GM10248 (cell line): ENCODE measurements at regions of chr3 and their contacts with region 1.

Region 1: GRCh38 chr3:32992322-32992692 is 40.9 kb downstream of the CCR4 start:
- DNase-seq: no peak
- CTCF ChIP-seq: no peak

Region 2: GRCh38 chr3:32975891-32976595 is 16.3 kb before region 1 on chr3:
- CTCF ChIA-PET with region 1: interaction called, 10 read pairs
- POLR2A ChIA-PET with region 1: no interaction called
- DNase-seq: no peak
- CTCF ChIP-seq: no peak

Region 3: DNA sequence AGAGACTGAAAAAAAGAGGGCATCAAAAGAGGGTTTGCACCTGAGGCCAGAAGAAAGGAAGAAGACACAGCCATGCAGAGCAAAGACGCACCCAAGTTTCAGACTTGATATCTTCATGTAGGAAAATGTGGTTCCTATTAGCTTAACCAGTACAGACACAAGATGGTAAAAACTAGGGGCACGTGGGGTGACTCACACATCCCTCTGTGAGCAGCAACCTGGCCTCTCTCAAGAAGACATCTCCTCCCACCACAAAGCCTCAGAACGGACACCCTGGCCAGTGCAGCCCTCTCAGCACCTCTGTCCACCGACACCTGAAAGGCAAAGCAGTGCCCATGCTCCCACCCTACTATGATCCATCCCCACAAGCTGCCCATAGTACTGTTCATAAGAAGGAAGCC is 71.3 kb after region 1 on chr3:
- CTCF ChIA-PET with region 1: no interaction called
- POLR2A ChIA-PET with region 1: no interaction called
- DNase-seq: peak; percentile 26
- CTCF ChIP-seq: no peak